ENCODE measurements at regions of chr3 and their contacts with region 1.

Region 1: GRCh38 chr3:189563866-189564563 is 67.2 kb upstream of the TP63 start:
- DNase-seq: peak; percentile 79
- H3K4me3 Mint-ChIP-seq: no peak overlapping the region
- H3K27ac Mint-ChIP-seq: no peak overlapping the region
- H3K4me1 Mint-ChIP-seq: peaks cover 16% of the 10 kb centered on the region
- H3K27me3 Mint-ChIP-seq: no peaks in the 10 kb centered on the region

Region 2: GRCh38 chr3:189276481-189277219 is 287.4 kb before region 1 on chr3:
- CTCF ChIA-PET with region 1: no interaction called
- intact Hi-C with region 1: loop called (anchors 1 kb)
- DNase-seq: no peak
- H3K4me3 Mint-ChIP-seq: no peak overlapping the region
- H3K27ac Mint-ChIP-seq: no peak overlapping the region
- H3K4me1 Mint-ChIP-seq: peaks cover 35% of the 10 kb centered on the region
- H3K27me3 Mint-ChIP-seq: no peaks in the 10 kb centered on the region

Region 3: GRCh38 chr3:189355481-189356201 is 208.4 kb before region 1 on chr3:
- CTCF ChIA-PET with region 1: no interaction called
- intact Hi-C with region 1: loop called (anchors 1 kb)
- DNase-seq: peak; percentile 54
- H3K4me3 Mint-ChIP-seq: peak overlapping the region; percentile 7
- H3K27ac Mint-ChIP-seq: peak overlapping the region; percentile 76
- H3K4me1 Mint-ChIP-seq: peaks cover 21% of the 10 kb centered on the region
- H3K27me3 Mint-ChIP-seq: no peaks in the 10 kb centered on the region

Region 4: DNA sequence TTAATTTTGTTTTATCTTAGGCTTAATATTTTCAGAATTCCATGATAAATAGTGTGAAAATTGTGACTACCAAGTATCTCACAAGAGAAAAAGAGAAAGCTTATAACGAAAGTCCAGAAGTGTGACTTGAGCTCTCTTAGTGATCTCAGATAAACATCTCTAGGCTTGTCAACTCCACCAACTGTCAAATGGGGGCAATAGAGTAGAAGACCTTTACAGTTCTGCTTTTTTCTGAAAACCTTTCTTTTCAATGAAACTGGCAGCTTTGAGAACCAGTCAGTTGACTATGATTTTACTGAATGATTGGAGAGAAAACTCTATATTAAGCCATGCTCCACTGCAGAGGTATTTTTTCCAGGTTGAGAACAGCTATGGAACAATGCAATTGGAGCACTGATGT is 52.0 kb before region 1 on chr3:
- CTCF ChIA-PET with region 1: no interaction called
- intact Hi-C with region 1: no loop called
- DNase-seq: no peak
- H3K4me3 Mint-ChIP-seq: no peak overlapping the region
- H3K27ac Mint-ChIP-seq: no peak overlapping the region
- H3K4me1 Mint-ChIP-seq: peaks cover 3% of the 10 kb centered on the region
- H3K27me3 Mint-ChIP-seq: peaks cover 3% of the 10 kb centered on the region

Region 5: DNA sequence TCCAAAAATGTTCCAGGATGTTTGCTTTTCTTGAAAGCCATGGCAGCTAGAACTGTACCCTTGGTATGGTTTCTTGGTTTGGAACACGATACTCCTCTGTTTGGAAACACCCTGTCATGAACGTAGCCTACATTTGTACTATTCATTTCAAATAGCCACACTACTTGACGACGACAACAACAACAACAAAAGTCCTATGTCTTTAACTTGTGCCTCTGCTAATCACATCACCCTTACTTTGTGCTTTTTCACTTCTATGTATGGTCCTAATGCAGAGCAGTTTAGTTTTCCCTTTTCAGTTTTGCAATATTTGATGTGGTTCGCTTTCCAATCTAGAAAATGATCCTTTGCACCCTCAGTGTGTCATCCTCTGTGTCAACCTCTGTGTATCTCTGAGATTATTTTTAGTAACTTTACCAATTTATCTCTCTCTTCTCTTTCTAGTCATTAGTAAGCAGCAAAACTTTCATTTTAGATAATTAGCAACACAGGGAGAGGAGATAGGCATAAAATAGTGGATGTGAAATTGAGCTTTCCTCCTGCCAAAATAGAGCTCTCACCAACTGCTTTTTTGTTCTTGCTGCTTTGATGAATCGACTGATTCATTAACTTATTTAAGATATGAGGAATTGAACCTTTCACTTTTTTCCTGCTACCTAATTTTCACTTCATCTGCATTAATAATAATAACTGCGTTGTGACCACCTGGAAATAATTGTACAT is 23.1 kb after region 1 on chr3:
- CTCF ChIA-PET with region 1: no interaction called
- intact Hi-C with region 1: loop called (anchors 1 kb)
- DNase-seq: no peak
- H3K4me3 Mint-ChIP-seq: no peak overlapping the region
- H3K27ac Mint-ChIP-seq: peak overlapping the region; percentile 15
- H3K4me1 Mint-ChIP-seq: peaks cover 28% of the 10 kb centered on the region
- H3K27me3 Mint-ChIP-seq: peaks cover 6% of the 10 kb centered on the region

Region 6: DNA sequence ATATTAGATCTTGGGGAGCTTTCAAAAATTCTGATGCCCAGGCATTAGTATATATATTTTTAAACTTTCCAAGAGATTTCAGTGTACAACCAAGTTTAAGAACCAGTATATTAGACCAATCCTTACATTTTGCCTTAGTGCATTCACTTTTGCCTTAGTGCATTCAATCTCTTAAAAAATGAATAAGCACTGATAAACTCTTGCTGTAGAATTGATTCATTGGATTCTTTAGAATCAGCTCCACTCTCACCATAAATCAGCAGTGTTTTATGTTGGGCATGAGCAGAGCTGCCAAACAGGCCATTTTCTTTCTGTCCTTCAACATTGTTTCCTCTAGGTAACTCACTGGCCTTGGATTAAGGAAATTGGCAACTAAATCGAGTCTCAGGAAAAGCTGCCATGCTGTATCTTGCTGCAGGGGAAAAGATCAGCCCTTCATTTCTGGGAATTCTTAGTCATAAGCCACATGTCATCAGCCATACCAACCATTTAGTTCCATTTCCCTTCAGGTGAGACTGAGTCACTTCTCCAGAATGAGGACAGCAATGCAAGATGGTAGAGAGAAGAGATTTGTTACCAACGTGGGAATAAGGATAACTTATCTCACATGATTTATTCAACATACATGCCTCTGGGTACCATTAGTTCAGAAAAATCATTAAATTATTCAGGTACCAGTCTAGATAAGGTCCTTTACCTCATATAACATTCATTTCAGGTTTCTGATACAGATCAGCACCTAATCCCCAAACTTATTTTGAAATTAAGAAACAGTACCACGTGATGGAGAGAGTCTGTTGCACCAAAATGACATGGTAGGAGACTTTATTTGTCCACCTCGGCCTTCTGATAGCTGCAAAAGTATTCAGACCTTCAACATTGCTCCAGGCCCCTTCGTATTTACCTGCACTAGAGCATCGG is 364.2 kb after region 1 on chr3:
- CTCF ChIA-PET with region 1: no interaction called
- intact Hi-C with region 1: no loop called
- DNase-seq: no peak
- H3K4me3 Mint-ChIP-seq: no peak overlapping the region
- H3K27ac Mint-ChIP-seq: no peak overlapping the region
- H3K4me1 Mint-ChIP-seq: peaks cover 20% of the 10 kb centered on the region
- H3K27me3 Mint-ChIP-seq: no peaks in the 10 kb centered on the region

Measured in activated naive CD4-positive, alpha-beta T cell treated with anti-CD3 and anti-CD28 coated beads for 36 hours (primary cell).